Activated naive CD4-positive, alpha-beta T cell treated with anti-CD3 and anti-CD28 coated beads, Interleukin-2, amount 10 ng/mL, durations not matched to agents 7 days and 5 days (primary cell): ENCODE measurements at regions of chr10 and their contacts with region 1.

Region 1: DNA sequence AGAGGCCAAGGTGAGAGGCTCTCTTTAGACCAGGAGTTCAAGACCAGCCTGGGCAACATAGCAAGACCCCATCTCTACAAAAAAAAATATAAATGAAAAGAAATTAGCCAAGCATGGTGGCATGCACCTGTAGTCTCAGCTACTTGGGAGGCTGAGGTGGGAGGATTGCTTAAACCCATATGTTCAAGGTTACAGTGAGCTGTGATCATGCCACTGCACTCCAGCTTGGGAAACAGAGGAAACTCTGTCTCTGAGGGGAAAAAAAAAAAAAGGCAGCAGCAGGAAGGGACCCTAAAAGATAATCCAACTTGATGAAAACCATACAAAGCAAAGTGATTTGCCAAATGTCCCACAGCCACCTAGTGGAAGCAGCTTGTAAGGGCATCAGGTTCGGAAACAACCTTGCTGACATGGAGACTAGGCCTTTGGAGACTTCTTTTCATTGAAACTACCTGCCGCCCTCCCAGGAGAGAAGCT is 15.6 kb upstream of the PBLD start:
- DNase-seq: peak; percentile 60
- H3K4me3 Mint-ChIP-seq: no peak overlapping the region
- H3K27ac Mint-ChIP-seq: no peak overlapping the region
- H3K4me1 Mint-ChIP-seq: no peaks in the 10 kb centered on the region
- H3K27me3 Mint-ChIP-seq: no peaks in the 10 kb centered on the region

Region 2: GRCh38 chr10:68212721-68213352 is 135.5 kb before region 1 on chr10:
- CTCF ChIA-PET with region 1: interaction called, 23 read pairs
- DNase-seq: no peak
- H3K4me3 Mint-ChIP-seq: no peak overlapping the region
- H3K27ac Mint-ChIP-seq: no peak overlapping the region
- H3K4me1 Mint-ChIP-seq: no peaks in the 10 kb centered on the region
- H3K27me3 Mint-ChIP-seq: peaks cover 23% of the 10 kb centered on the region

Region 3: DNA sequence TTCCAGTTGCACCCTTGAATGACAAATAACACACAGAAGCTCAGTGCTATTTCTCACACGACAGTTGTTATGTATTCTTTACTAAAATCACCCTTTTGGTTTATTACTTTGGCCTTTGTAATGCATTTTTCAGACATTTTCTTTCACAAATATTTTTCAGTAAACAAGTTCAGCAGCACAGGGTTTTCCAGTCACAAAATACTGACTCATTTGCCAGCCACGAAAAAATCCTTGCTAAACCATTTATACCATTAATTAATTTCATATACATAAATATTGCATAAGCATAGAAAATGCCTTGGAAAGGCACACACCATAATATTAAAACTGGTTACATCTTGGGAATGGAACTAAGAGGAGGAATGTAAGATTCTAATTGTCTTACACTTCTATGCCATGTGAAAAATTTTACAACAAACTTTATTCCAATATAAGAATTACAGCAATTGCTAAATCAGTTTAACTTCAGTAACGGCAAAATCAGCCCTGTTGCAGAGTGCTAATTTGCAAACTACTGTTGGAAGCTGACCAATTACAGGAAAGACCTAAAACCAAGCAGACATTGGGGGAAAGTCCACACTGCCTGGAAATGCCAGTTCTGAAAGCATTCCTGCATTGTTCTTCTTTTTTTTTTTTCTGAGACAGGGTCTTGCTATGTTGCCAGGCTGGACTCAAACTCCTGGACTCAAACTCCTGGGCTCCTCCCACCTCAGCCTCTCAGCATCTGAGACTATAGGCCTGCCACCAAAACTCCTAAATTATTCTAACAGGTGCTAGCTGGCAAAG is 16.0 kb after region 1 on chr10:
- CTCF ChIA-PET with region 1: interaction called, 16 read pairs
- DNase-seq: no peak
- H3K4me3 Mint-ChIP-seq: no peak overlapping the region
- H3K27ac Mint-ChIP-seq: no peak overlapping the region
- H3K4me1 Mint-ChIP-seq: no peaks in the 10 kb centered on the region
- H3K27me3 Mint-ChIP-seq: no peaks in the 10 kb centered on the region